ENCODE measurements at regions of chr14 and their contacts with region 1.

Region 1: GRCh38 chr14:64823305-64823861 is 56.3 kb downstream of the SPTB start:
- DNase-seq: peak; percentile 86
- H3K4me3 ChIP-seq: no peak overlapping the region
- H3K27ac ChIP-seq: no peak overlapping the region
- H3K4me1 ChIP-seq: peaks cover 0 to 8% (median 6%) of the 10 kb centered on the region in 4 donors
- H3K27me3 ChIP-seq: no peaks in the 10 kb centered on the region
- CTCF ChIP-seq: peak; percentile 43 to 80 (median 79)
- EP300 ChIP-seq: no peak
- POLR2A ChIP-seq: no peak

Region 2: GRCh38 chr14:64880221-64881121 is 57.1 kb after region 1 on chr14:
- intact Hi-C with region 1: no loop called
- DNase-seq: peak; percentile 62
- H3K4me3 ChIP-seq: peak overlapping the region; percentile 24 to 59 (median 54)
- H3K27ac ChIP-seq: peak overlapping the region in 1 of 4 donors; percentile 23
- H3K4me1 ChIP-seq: peaks cover 0 to 20% (median 18%) of the 10 kb centered on the region in 4 donors
- H3K27me3 ChIP-seq: peaks cover 16 to 49% (median 24%) of the 10 kb centered on the region in 3 donors
- CTCF ChIP-seq: no peak
- EP300 ChIP-seq: no peak
- POLR2A ChIP-seq: no peak

Region 3: DNA sequence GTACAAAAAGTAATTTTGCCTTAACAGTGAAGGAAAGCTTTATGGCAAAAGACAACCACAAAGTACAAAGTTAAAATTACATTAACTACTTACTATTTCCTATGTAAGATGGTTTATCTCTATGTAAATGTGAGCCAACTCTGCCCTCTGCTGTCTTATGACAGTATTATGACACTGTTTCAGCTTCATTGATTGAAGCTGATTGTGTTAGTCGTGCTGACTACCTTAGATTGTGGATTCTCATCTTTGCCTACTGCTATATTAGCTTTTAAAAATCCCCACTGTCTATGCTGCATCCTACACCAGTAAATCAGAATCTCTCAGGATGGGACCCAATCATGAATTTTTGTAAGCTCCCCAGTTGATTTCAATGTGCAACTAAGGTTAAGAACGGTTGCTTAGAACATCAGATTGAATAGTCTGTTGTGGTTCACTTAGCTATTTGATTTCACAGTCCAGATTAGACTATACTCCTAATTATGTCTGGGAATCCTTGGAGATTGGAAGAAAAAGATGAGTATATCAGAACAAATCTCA is 68.5 kb after region 1 on chr14:
- intact Hi-C with region 1: loop called (anchors 5 kb)
- DNase-seq: no peak
- H3K4me3 ChIP-seq: no peak overlapping the region
- H3K27ac ChIP-seq: no peak overlapping the region
- H3K4me1 ChIP-seq: no peaks in the 10 kb centered on the region
- H3K27me3 ChIP-seq: peaks cover 0 to 6% (median 0%) of the 10 kb centered on the region in 3 donors
- CTCF ChIP-seq: peak in 2 of 4 experiments; percentile 13 to 26
- EP300 ChIP-seq: no peak
- POLR2A ChIP-seq: no peak

Measured in sigmoid colon (tissue), 7 donors.